ENCODE measurements at regions of chr4 and their contacts with region 1.

Region 1: GRCh38 chr4:87375719-87376291 is 15.2 kb downstream of the HSD17B11 start:
- H3K4me3 Mint-ChIP-seq: no peak overlapping the region
- H3K27ac Mint-ChIP-seq: no peak overlapping the region
- H3K4me1 Mint-ChIP-seq: no peaks in the 10 kb centered on the region
- H3K27me3 Mint-ChIP-seq: no peaks in the 10 kb centered on the region

Region 2: GRCh38 chr4:87390891-87391575 is 15.2 kb after region 1 on chr4 and contains the start of gene HSD17B11:
- intact Hi-C with region 1: loop called (anchors 2 kb)
- H3K4me3 Mint-ChIP-seq: peak within 1 kb of the TSS; percentile 90
- H3K27ac Mint-ChIP-seq: peak within 1 kb of the TSS; percentile 93
- H3K4me1 Mint-ChIP-seq: peaks cover 36% of the 10 kb centered on the region
- H3K27me3 Mint-ChIP-seq: no peaks in the 10 kb centered on the region

Region 3: DNA sequence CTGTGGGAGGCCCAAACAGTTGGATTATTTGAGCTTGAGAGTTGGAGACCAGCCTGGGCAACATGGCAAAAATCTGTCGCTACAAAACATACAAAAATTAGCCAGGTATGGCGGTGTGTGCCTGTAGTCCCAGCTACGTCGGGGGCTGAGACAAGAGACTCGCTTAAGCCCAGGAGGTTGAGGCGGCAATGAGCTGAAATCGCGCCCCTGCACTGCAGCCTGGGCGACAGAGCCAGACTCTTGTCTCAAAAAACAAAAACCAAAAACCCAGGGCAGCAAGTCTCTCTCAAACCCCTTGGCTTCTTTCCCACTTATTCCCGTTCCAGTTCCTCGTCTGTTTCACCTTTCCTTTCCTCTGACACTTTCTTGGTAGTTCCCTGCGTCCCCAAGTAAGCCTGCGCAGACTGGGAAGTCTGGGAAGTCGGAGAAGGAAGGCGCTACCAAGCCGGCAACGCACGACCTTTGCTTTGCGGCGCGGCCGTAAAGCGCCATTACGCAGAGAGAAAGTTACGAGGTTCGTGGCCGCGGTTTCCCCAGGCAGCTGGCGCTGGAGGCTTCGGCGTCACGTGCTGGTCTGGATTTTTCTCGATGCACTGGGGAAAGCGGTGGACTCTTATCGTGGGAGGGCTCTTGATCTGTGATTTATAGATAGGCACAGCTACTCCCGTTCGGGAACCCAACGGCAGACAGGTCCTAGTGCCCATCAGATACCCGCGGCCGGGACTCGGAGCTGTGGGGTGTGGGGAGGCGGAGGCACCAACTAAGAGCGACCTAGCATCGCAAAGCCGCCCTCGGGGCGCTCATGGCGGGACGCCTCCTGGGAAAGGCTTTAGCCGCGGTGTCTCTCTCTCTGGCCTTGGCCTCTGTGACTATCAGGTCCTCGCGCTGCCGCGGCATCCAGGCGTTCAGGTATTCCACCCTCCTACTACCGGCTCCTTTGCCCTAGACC is 46.6 kb after region 1 on chr4 and contains the start of gene NUDT9:
- intact Hi-C with region 1: loop called (anchors 10 kb)
- H3K4me3 Mint-ChIP-seq: peak within 1 kb of the TSS; percentile 96
- H3K27ac Mint-ChIP-seq: peak within 1 kb of the TSS; percentile 98
- H3K4me1 Mint-ChIP-seq: peaks cover 24% of the 10 kb centered on the region
- H3K27me3 Mint-ChIP-seq: no peaks in the 10 kb centered on the region

Region 4: GRCh38 chr4:87465739-87466366 is 90.0 kb after region 1 on chr4:
- intact Hi-C with region 1: loop called (anchors 1 kb)
- H3K4me3 Mint-ChIP-seq: no peak overlapping the region
- H3K27ac Mint-ChIP-seq: no peak overlapping the region
- H3K4me1 Mint-ChIP-seq: no peaks in the 10 kb centered on the region
- H3K27me3 Mint-ChIP-seq: no peaks in the 10 kb centered on the region

Region 5: DNA sequence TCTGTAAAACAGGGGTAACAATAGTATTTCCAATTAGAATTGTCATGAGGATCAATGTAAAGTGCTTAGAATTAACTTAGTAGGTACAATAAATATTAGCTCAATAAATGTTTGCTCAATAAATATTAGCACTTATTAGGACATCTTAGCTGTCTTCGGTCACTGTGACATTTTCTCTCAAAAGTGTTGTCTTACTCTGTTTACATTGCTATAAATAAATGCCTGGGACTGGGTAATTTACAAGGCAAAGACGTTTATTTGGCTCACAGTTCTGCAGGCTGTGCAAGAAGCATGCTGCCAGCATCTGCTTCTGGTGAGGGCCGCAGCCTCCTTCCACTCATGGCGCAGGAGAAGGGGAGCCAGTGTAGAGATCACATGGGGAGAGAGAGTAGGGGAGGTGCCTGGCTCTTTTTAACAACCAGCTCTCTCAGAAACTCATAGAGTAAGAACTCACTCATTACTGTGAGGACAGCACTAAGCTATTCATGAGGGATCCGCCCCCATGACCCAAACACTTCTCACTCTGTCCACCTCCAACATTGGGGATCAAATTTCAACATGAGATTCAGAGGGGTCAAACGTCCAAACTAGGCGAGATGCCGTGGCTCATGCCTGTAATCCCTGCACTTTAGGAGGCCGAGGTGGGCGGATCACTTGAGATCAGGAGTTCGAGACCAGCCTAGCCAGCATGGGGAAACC is 959.3 kb after region 1 on chr4:
- intact Hi-C with region 1: no loop called
- H3K4me3 Mint-ChIP-seq: no peak overlapping the region
- H3K27ac Mint-ChIP-seq: no peak overlapping the region
- H3K4me1 Mint-ChIP-seq: peaks cover 19% of the 10 kb centered on the region
- H3K27me3 Mint-ChIP-seq: no peaks in the 10 kb centered on the region

Measured in dendritic cell treated with granulocyte-macrophage colony-stimulating factor and Interleukin-4, amounts not matched to agents 40 ng/mL and 50 ng/mL, for 4 days (primary cell).